PC-3 (cell line): ENCODE measurements at regions of chr13 and their contacts with region 1.

Region 1: GRCh38 chr13:40407567-40407966 is 258.9 kb downstream of the FOXO1 start:
- DNase-seq: peak; percentile 59
- ATAC-seq: peak; percentile 51
- H3K4me3 ChIP-seq: no peak overlapping the region
- H3K27ac ChIP-seq: peak overlapping the region; percentile 92
- H3K4me1 ChIP-seq: peaks cover 52% of the 10 kb centered on the region
- H3K27me3 ChIP-seq: no peaks in the 10 kb centered on the region
- CTCF ChIP-seq: no peak

Region 2: GRCh38 chr13:42028113-42028799 is 1620.7 kb after region 1 on chr13:
- CTCF ChIA-PET with region 1: no interaction called
- POLR2A ChIA-PET with region 1: interaction called, 11 read pairs
- intact Hi-C with region 1: no loop called
- DNase-seq: no peak
- ATAC-seq: no peak
- H3K4me3 ChIP-seq: no peak overlapping the region
- H3K27ac ChIP-seq: no peak overlapping the region
- H3K4me1 ChIP-seq: peaks cover 32% of the 10 kb centered on the region
- H3K27me3 ChIP-seq: no peaks in the 10 kb centered on the region
- CTCF ChIP-seq: no peak